Heart left ventricle (tissue), 16 donors: ENCODE measurements at regions of chr20 and their contacts with region 1.

Region 1: GRCh38 chr20:32902456-32903420 is 44.0 kb downstream of the EFCAB8 start:
- DNase-seq: peak in 4 of 5 donors; percentile 19 to 75 (median 50)
- ATAC-seq: peak in 3 of 4 donors; percentile 62 to 76 (median 71)
- H3K4me3 ChIP-seq: no peak overlapping the region
- H3K27ac ChIP-seq: no peak overlapping the region
- H3K4me1 ChIP-seq: no peaks in the 10 kb centered on the region
- H3K27me3 ChIP-seq: no peaks in the 10 kb centered on the region
- CTCF ChIP-seq: peak; percentile 79 to 97 (median 86)
- POLR2A ChIP-seq: no peak

Region 2: DNA sequence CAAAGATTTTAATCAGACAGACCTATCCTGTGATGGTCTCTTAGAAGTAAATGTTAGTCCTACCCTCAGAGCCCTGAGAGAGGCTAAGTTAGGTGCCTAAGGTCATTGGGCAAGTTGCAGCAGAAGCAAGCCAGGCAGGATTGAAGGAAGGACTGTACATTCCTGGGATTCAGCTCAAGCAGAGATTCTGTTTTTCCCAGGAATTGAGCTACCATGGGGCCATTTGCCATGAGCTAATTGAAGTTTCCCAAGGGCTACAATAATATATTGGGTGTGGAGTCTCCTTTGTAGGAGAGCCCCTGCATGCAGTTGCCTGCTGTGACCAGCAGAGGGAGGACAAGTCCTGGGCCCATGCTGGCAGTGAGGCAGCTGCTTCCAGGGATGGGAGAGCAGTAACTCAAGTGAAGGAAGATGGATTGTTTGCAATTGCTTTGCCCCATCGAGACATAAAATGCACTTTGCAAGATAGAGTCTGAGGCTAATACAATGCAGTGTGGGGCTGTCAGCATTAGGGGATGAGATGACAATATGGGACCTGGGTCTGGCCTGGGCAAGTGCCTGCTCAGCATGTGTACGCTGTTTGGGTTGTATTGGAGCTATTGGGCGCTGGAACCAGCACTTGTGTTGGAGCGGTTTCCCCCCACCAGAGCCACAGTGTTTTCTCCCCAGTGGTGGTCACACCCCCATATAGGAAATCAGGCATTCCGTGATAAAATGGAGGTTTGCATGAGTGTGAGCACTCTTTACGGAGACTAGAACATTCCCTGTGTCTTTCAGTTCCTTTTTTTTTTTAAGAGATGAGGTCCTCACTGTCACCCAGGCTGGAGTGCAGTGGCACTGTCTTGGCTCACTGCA is 112.6 kb before region 1 on chr20:
- intact Hi-C with region 1: loop called in 3 of 10 experiments (anchors 5 to 10 kb)
- DNase-seq: peak; percentile 72 to 87 (median 75)
- ATAC-seq: peak; percentile 79 to 90 (median 88)
- H3K4me3 ChIP-seq: no peak overlapping the region
- H3K27ac ChIP-seq: no peak overlapping the region
- H3K4me1 ChIP-seq: peaks cover 0 to 15% (median 5%) of the 10 kb centered on the region in 12 donors
- H3K27me3 ChIP-seq: no peaks in the 10 kb centered on the region
- CTCF ChIP-seq: peak; percentile 96 to 99 (median 98)
- POLR2A ChIP-seq: no peak

Region 3: GRCh38 chr20:33076662-33077372 is 174.1 kb after region 1 on chr20:
- intact Hi-C with region 1: loop called in 4 of 10 experiments (anchors 5 kb)
- DNase-seq: no peak
- ATAC-seq: no peak
- H3K4me3 ChIP-seq: no peak overlapping the region
- H3K27ac ChIP-seq: no peak overlapping the region
- H3K4me1 ChIP-seq: no peaks in the 10 kb centered on the region
- H3K27me3 ChIP-seq: peaks cover 0 to 4% (median 0%) of the 10 kb centered on the region in 9 donors
- CTCF ChIP-seq: peak in 4 of 12 donors; percentile 9 to 44 (median 12)
- POLR2A ChIP-seq: no peak

Region 4: DNA sequence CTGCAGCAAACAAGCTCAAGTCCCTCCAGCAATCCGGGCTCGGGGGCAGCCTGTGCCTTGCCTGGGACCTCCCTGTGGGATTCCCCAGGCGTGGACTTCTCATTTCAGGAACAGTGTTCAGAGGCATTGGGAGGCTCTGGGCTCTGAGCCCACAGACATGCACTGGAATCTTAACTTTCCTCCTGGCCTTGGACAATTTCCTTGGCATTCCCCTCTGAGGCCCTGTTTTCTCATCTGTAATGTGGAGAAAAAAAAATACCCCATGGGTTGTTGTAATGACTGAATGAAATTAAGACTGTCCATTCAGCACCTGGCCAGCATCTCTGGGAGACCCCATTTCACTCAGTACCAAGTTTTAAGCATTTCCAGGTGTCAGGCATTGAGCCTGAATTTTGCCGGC is 194.3 kb after region 1 on chr20:
- intact Hi-C with region 1: loop called in 9 of 10 experiments (anchors 1 to 5 kb)
- DNase-seq: no peak
- ATAC-seq: no peak
- H3K4me3 ChIP-seq: no peak overlapping the region
- H3K27ac ChIP-seq: no peak overlapping the region
- H3K4me1 ChIP-seq: no peaks in the 10 kb centered on the region
- H3K27me3 ChIP-seq: no peaks in the 10 kb centered on the region
- CTCF ChIP-seq: no peak
- POLR2A ChIP-seq: no peak

Region 5: GRCh38 chr20:33291830-33292355 is 389.2 kb after region 1 on chr20:
- intact Hi-C with region 1: loop called in 7 of 10 experiments (anchors 5 to 10 kb)
- DNase-seq: peak in 1 of 5 donors; percentile 21
- ATAC-seq: peak in 1 of 4 donors; percentile 20
- H3K4me3 ChIP-seq: no peak overlapping the region
- H3K27ac ChIP-seq: no peak overlapping the region
- H3K4me1 ChIP-seq: no peaks in the 10 kb centered on the region
- H3K27me3 ChIP-seq: peaks cover 0 to 44% (median 3%) of the 10 kb centered on the region in 9 donors
- CTCF ChIP-seq: peak; percentile 43 to 87 (median 66)
- POLR2A ChIP-seq: no peak

Region 6: GRCh38 chr20:33299111-33299603 is 396.4 kb after region 1 on chr20:
- intact Hi-C with region 1: loop called (anchors 2 to 10 kb)
- DNase-seq: peak; percentile 31 to 79 (median 53)
- ATAC-seq: peak in 3 of 4 donors; percentile 69 to 76 (median 72)
- H3K4me3 ChIP-seq: no peak overlapping the region
- H3K27ac ChIP-seq: no peak overlapping the region
- H3K4me1 ChIP-seq: peaks cover 0 to 6% (median 0%) of the 10 kb centered on the region in 12 donors
- H3K27me3 ChIP-seq: peaks cover 0 to 17% (median 0%) of the 10 kb centered on the region in 9 donors
- CTCF ChIP-seq: peak; percentile 71 to 90 (median 85)
- POLR2A ChIP-seq: no peak